Activated B cell treated with CpG ODN at 0.5 μM for 24 hours (primary cell): ENCODE measurements at regions of chrX and their contacts with region 1.

Region 1: GRCh38 chrX:84501798-84502628 is at the start of gene HDX:
- DNase-seq: peak; percentile 30
- ATAC-seq: peak; percentile 96
- H3K4me3 Mint-ChIP-seq: peak within 1 kb of the TSS; percentile 87
- H3K27ac Mint-ChIP-seq: peak within 1 kb of the TSS; percentile 89
- H3K4me1 Mint-ChIP-seq: peaks cover 5% of the 10 kb centered on the region
- H3K27me3 Mint-ChIP-seq: no peaks in the 10 kb centered on the region
- CTCF ChIP-seq: no peak
- total RNA-seq, gene HDX: 2.5 and 2.9 TPM in 2 replicates

Region 2: GRCh38 chrX:86148024-86148511 is 1646.1 kb after region 1 on chrX and contains the start of gene DACH2:
- CTCF ChIA-PET with region 1: no interaction called
- POLR2A ChIA-PET with region 1: no interaction called
- intact Hi-C with region 1: loop called (anchors 5 kb)
- DNase-seq: peak; percentile 20
- ATAC-seq: peak; percentile 98
- H3K4me3 Mint-ChIP-seq: peak within 1 kb of the TSS; percentile 84
- H3K27ac Mint-ChIP-seq: no peak within 1 kb of the TSS
- H3K4me1 Mint-ChIP-seq: peaks cover 19% of the 10 kb centered on the region
- H3K27me3 Mint-ChIP-seq: peaks cover 21% of the 10 kb centered on the region
- CTCF ChIP-seq: no peak
- total RNA-seq, gene DACH2: not detected in 2 replicates